Activated T-helper 2 cell treated with anti-CD3 and anti-CD28 coated beads, Interferon-gamma antibody, Interleukin-2, Interleukin-4, amounts not matched to agents 10 μg/mL and 5 μg/mL and 100 μg/mL, durations not matched to agents 14 hours and 24 hours and 36 hours (primary cell): ENCODE measurements at regions of chr12 and their contacts with region 1.

Region 1: GRCh38 chr12:8078398-8078797 is 3.7 kb upstream of the NECAP1 start:
- DNase-seq: peak; percentile 18
- H3K4me3 Mint-ChIP-seq: no peak overlapping the region
- H3K27ac Mint-ChIP-seq: no peak overlapping the region
- H3K4me1 Mint-ChIP-seq: peaks cover 19% of the 10 kb centered on the region
- H3K27me3 Mint-ChIP-seq: no peaks in the 10 kb centered on the region

Region 2: DNA sequence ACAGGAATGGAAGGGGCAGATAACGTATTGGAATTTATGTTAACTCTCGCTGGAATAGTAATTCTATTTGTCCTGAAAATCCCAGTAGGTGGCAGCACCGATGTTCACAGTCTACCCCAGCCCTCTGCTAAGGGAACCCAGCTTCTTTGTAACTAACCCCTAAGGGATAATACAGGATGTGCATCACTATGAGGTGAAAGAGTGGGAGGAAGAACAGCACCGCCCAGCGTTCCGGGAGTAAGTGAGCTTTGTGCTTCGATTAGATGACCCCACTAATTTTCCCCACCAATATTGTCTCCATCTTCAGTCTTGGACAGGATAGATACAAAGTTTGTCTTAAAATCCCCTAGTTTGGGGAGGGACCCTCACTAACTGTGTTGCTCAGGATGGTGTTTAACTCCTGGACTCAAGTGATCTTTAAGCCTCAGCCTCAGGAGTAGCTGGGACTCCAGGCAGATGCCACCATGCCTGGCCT is 145.1 kb before region 1 on chr12:
- intact Hi-C with region 1: loop called (anchors 5 kb)
- DNase-seq: peak; percentile 69
- H3K4me3 Mint-ChIP-seq: no peak overlapping the region
- H3K27ac Mint-ChIP-seq: no peak overlapping the region
- H3K4me1 Mint-ChIP-seq: peaks cover 27% of the 10 kb centered on the region
- H3K27me3 Mint-ChIP-seq: no peaks in the 10 kb centered on the region

Region 3: DNA sequence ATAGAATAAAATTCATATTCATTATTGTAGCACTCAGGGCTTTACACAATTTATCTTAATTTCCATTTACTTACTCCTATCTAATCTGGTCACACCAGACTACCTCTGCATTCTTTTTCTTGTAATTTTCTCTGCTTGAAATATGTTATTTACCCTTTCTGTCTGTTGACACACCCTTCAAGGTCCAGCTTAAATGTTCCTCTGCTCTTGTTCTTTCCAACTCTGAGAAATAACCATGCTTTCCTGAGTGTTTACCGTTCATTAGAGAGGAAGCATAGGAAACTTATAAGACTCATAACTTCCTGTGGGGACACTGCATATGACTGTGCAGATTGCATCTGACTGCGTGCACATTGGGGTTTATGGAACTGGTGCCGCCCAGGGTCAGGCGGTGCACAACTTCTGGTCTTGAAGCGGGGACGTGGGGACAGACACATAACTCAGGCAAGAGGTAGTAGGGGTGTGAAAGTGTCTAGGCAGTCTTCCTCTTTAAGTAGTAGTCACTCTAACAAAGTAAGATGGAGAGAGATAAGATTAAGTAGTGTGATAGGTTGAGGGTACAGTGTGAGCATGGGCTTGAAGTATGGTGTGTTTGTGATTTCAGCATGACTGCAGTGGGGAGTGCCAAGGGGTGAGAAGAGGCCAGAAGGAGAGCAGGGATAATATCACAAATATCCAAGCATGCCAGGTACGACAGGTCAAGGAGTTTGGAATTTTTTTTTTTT is 88.4 kb before region 1 on chr12:
- intact Hi-C with region 1: loop called (anchors 1 kb)
- DNase-seq: peak; percentile 83
- H3K4me3 Mint-ChIP-seq: peak overlapping the region; percentile 68
- H3K27ac Mint-ChIP-seq: peak overlapping the region; percentile 86
- H3K4me1 Mint-ChIP-seq: peaks cover 35% of the 10 kb centered on the region
- H3K27me3 Mint-ChIP-seq: no peaks in the 10 kb centered on the region

Region 4: DNA sequence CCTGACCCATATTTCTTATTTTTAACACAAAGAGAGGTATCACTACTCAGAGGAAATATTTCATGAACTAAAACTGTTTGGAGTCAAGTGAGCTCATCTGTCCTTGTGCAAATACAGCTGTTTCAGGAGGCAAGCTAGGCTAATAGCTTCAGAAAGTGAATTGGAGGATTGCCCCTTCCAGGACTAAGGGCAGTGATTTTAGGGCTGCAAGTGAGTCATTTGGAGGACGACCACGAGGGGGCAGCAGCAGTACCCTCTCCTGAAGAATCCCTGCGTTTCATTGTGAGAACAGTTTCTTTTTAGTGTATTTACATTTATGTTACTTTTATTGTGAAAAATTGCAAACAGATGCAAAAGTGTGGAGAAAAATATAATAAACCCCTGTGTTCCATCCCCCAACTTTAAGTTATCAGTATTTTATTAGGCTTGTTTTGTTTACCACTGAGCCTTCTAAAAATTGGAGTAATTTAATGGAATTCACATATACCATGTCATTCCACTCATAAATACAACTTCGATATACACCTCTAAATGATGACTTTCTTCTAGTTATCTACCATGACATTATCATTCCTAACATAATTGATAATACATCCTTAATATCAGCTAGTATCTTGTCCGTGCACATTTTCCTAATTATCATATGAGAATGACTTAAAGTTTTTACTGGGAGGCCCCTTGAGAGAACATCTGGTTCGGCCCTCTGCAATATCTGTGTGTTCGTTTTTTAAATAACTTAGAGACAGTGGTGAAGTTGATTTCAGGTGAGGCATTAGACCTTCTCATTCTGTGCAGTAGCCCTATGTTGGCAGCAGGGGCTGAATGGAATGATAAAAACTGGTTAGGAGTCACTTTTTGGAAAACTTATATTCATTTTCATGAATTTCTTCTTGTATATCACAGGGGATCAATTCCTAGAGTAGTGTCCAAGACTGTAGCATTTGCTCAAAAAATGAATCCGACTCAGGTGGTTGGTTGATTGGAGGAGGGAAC is 32.1 kb before region 1 on chr12:
- intact Hi-C with region 1: loop called (anchors 1 kb)
- DNase-seq: peak; percentile 60
- H3K4me3 Mint-ChIP-seq: no peak overlapping the region
- H3K27ac Mint-ChIP-seq: no peak overlapping the region
- H3K4me1 Mint-ChIP-seq: peaks cover 5% of the 10 kb centered on the region
- H3K27me3 Mint-ChIP-seq: no peaks in the 10 kb centered on the region

Region 5: GRCh38 chr12:8156845-8157244 is 78.4 kb after region 1 on chr12 and contains the start of gene ZNF705A:
- intact Hi-C with region 1: no loop called
- DNase-seq: no peak
- H3K4me3 Mint-ChIP-seq: no peak within 1 kb of the TSS
- H3K27ac Mint-ChIP-seq: no peak within 1 kb of the TSS
- H3K4me1 Mint-ChIP-seq: peaks cover 14% of the 10 kb centered on the region
- H3K27me3 Mint-ChIP-seq: peaks cover 49% of the 10 kb centered on the region
- total RNA-seq, gene ZNF705A: not detected in 2 replicates